Activated naive CD4-positive, alpha-beta T cell treated with anti-CD3 and anti-CD28 coated beads for 36 hours (primary cell): ENCODE measurements at regions of chr18 and their contacts with region 1.

Region 1: GRCh38 chr18:37564711-37565100 is 892 bp downstream of the CELF4 start:
- DNase-seq: peak; percentile 14
- H3K4me3 Mint-ChIP-seq: no peak overlapping the region
- H3K27ac Mint-ChIP-seq: no peak overlapping the region
- H3K4me1 Mint-ChIP-seq: peaks cover 19% of the 10 kb centered on the region
- H3K27me3 Mint-ChIP-seq: peaks cover 62% of the 10 kb centered on the region

Region 2: DNA sequence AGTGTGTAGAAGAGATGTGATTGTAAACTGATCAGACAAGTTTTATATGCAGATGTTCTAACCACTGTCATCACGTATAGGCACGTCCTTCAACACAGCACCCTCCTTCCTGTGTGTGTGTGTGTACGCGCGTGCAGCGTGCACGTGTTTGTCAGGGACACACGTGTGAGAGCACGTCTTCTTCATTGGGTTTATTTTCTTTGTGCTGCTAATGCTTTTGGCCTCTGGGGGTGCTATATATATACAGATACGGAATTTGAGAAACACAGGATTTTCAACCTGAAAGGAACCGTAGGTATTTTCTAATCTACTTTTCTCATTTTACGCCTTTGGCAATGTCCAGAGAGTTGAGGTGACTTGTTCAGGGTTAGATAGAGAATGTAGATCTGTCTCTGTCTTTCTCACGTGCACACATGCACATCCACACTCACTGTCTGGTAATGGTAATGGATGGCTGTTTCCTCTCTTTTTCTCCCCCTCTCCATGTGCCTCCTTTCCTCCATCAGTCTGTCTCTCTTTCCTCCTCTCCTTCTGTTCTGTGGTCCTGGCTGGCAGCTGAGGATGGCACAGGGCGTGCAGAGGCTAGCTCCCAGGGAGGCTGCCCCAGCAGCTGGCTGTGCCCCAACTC is 14.3 kb after region 1 on chr18:
- CTCF ChIA-PET with region 1: no interaction called
- intact Hi-C with region 1: no loop called
- DNase-seq: peak; percentile 15
- H3K4me3 Mint-ChIP-seq: no peak overlapping the region
- H3K27ac Mint-ChIP-seq: no peak overlapping the region
- H3K4me1 Mint-ChIP-seq: no peaks in the 10 kb centered on the region
- H3K27me3 Mint-ChIP-seq: peaks cover 16% of the 10 kb centered on the region

Region 3: DNA sequence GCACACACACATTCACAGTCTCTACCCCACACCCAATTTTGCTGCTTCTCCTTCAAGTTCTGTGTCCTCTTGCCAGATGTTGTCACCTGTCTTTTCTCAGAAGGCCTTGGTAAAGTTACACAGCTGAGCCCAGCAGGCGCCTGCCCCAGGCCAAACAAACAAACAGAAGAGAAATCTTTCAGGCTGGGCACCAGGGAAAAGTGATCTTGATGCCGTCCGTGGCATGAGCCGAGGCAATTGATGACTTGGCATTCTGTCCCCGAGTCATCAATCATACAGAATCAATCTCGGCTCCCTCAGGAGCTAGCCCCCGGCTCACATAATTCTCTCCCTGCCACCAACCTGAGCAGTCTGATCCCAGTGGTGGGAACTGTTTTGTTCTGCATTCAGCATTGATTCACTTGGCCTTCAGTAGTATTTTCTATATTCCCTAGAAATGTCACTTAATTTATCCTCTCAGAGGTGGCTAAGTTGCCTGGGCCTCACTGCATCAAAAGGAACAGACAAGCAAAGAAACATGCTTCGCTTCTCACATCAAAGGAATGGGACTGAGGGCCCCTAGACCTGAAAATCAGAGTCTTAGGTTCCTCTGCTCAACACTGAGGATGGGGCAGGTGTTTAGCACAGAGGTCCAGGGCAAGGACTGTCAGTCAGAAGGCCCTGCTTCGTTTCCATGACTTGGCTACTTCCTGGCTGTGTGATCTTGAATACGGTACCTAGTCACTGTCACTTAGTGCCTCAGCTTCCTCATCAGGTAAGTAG is 279.7 kb after region 1 on chr18:
- CTCF ChIA-PET with region 1: no interaction called
- intact Hi-C with region 1: no loop called
- DNase-seq: no peak
- H3K4me3 Mint-ChIP-seq: no peak overlapping the region
- H3K27ac Mint-ChIP-seq: no peak overlapping the region
- H3K4me1 Mint-ChIP-seq: no peaks in the 10 kb centered on the region
- H3K27me3 Mint-ChIP-seq: no peaks in the 10 kb centered on the region

Region 4: GRCh38 chr18:38923126-38923525 is 1358.4 kb after region 1 on chr18:
- CTCF ChIA-PET with region 1: no interaction called
- intact Hi-C with region 1: loop called (anchors 10 kb)
- DNase-seq: no peak
- H3K4me3 Mint-ChIP-seq: no peak overlapping the region
- H3K27ac Mint-ChIP-seq: no peak overlapping the region
- H3K4me1 Mint-ChIP-seq: no peaks in the 10 kb centered on the region
- H3K27me3 Mint-ChIP-seq: peaks cover 9% of the 10 kb centered on the region